ENCODE measurements at regions of chr3 and their contacts with region 1.

Region 1: DNA sequence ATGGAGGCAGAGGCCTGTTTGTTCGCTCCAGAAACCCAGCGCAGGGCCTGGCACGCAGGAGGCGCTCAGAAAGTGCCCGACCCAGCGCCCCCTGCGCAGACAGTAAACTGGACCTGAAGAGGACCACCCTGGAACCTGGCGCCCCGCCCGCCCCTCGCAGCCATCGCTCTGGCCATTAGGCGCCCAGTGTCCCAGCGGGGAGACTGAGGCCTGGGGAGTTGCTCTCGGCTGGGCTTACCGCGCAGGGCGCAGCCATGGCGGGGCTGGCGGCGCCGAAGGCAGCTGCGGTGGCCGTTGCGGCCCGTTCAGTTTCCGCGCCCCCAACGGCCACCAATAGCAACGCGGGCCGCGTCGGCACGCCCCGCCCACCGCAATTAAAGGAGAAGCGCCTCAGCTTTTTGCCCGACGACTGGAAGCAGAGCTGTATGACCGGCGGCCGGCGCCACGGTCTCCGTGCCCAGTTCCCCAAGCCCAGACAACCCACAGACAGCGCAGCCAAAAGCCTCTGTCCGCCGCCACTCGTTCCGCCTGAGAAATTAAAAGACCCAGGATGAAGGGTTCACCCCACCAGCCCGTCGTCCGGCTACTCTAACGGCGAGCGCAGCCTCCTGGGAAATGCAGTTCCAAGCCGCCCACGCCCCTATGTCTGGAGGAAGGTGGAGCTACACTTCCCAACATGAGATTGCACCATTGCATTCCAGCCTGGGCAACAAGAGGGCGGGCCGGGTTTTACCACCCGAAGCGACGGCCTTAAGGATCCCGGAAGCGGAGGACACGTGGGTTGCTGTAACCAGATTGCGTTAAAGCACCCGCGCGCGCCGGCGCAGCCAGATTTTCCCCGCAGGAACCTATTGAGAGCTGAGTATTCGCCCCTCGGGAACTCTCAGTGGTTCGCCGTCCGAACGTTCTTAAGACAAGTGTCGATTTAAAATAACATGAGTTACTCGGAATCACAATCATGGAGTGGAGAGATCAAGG is at the start of gene POC1A:
- DNase-seq: peak; percentile 83 to 90 (median 85)
- H3K4me3 ChIP-seq: peak within 1 kb of the TSS; percentile 93 to 95
- H3K4me3 Mint-ChIP-seq: peak within 1 kb of the TSS; percentile 93 to 98 (median 97)
- H3K27ac ChIP-seq: peak within 1 kb of the TSS; percentile 74
- H3K27ac Mint-ChIP-seq: peak within 1 kb of the TSS; percentile 95 to 98 (median 98)
- H3K4me1 ChIP-seq: peaks cover 13% of the 10 kb centered on the region
- H3K4me1 Mint-ChIP-seq: peaks cover 3 to 15% (median 8%) of the 10 kb centered on the region in 4 donors
- H3K27me3 ChIP-seq: no peaks in the 10 kb centered on the region
- H3K27me3 Mint-ChIP-seq: no peaks in the 10 kb centered on the region
- total RNA-seq, gene POC1A: 0.99 to 1.1 TPM

Region 2: DNA sequence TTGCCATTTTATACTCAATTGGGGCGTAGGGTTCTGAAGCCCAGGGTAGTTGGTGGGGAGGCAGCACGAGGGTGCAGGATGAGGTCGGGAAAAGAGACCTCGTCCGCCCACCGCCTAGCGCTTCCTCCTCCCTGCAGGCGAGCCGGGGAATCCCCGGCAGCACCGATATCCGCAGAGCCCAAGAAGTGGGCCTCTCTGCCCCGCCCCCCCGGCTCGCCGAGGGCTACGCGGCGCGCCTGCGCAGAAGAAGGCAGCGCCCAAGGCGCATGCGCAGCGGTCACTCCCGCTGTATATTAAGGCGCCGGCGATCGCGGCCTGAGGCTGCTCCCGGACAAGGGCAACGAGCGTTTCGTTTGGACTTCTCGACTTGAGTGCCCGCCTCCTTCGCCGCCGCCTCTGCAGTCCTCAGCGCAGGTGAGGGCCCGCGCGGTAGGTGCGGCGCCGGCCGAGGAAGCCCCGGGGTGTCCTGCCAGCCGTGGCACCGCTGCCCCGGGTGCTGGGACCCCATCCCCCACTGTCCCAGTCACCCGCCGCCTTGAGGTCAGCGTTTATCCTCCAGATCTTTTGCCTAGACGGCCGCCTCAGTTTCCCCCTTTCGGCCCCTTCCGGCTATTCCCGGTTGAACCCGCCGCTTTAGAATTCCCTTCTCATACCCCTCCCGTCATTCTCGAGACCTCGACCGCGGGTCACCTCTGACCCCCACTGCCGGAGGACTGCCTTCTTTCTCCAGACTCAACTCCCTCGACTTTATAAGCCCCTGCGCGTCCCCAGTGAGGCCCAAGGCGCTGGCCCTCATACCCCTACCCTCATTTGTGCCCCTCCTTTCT is 43.6 kb after region 1 on chr3 and contains the start of gene ALAS1:
- CTCF ChIA-PET with region 1: no interaction called
- POLR2A ChIA-PET with region 1: interaction called, 6 read pairs
- intact Hi-C with region 1: loop called (anchors 1 kb)
- DNase-seq: peak; percentile 90 to 95 (median 94)
- H3K4me3 ChIP-seq: peak within 1 kb of the TSS; percentile 82 to 90
- H3K4me3 Mint-ChIP-seq: peak within 1 kb of the TSS; percentile 93 to 99 (median 96)
- H3K27ac ChIP-seq: peak within 1 kb of the TSS; percentile 92
- H3K27ac Mint-ChIP-seq: peak within 1 kb of the TSS; percentile 91 to 99 (median 97)
- H3K4me1 ChIP-seq: peaks cover 52% of the 10 kb centered on the region
- H3K4me1 Mint-ChIP-seq: peaks cover 27 to 60% (median 47%) of the 10 kb centered on the region in 4 donors
- H3K27me3 ChIP-seq: no peaks in the 10 kb centered on the region
- H3K27me3 Mint-ChIP-seq: no peaks in the 10 kb centered on the region
- total RNA-seq, gene ALAS1: 30.0 to 34.6 TPM

Region 3: DNA sequence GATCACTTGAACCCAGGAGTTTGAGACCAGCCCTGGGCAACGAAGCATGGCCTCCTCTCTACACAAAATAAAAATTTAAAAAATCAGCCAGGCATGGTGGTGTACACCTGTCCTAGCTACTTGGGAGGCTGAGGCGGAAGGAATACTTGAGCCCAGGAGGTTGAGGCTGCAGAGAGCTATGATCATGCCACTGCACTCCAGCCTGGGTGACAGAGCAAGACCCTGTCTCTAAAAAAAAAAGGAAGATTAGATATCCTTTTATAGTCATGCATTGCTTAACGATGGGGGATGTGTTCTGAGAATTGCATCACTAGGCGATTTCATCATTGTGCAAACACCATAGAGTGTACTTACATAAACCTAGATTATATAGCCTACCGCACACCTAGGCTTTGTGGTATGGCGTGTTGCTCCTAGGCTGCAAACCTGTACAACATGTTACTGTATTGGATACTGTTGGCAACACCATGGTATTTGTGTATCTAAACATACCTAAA is 56.2 kb after region 1 on chr3:
- CTCF ChIA-PET with region 1: no interaction called
- POLR2A ChIA-PET with region 1: no interaction called
- intact Hi-C with region 1: no loop called
- DNase-seq: no peak
- H3K4me3 ChIP-seq: no peak overlapping the region
- H3K4me3 Mint-ChIP-seq: no peak overlapping the region
- H3K27ac ChIP-seq: no peak overlapping the region
- H3K27ac Mint-ChIP-seq: peak overlapping the region in 1 of 7 donors; percentile 27
- H3K4me1 ChIP-seq: peaks cover 12% of the 10 kb centered on the region
- H3K4me1 Mint-ChIP-seq: peaks cover 14 to 28% (median 16%) of the 10 kb centered on the region in 4 donors
- H3K27me3 ChIP-seq: no peaks in the 10 kb centered on the region
- H3K27me3 Mint-ChIP-seq: no peaks in the 10 kb centered on the region